ENCODE measurements at regions of chr1 and their contacts with region 1.

Region 1: DNA sequence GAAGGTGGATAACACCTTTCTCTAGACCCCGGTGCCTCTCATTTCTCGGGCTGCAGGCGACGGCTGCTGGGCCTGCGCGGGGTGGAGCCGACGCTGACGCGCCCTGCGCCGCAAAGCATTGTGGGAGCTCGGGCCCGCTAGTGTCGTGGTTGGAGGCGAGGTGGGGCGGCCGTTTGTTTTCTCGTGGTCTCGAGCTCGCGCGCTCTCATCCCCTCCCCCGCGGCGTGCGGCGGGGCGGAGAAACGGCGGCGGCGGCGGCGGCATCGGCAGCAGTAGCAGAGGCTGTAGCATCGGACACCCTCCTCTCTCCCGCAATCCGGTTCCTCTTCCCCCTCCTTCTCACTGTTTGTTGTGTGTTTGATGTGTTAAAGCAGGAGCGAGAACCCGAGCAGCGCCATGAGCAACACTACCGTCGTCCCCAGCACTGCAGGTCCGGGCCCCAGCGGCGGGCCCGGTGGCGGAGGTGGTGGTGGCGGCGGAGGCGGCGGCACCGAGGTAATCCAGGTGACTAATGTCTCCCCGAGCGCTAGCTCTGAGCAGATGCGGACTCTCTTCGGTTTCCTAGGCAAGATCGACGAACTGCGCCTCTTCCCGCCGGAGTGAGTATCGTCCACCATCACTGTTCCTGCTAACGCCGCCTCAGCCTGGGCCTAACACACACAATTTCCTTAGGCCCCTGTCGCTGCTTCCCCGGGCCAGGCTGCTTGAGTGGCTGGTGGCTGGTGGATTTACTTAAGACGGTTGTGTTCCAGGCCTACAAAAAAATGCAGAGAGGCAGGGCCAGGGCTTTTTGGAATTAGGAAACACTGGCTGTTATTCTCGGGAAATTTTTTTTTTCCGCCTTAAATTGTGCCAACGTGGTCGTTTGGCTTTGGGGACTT is at the start of gene SRSF11:
- DNase-seq: peak; percentile 97
- H3K4me3 Mint-ChIP-seq: peak within 1 kb of the TSS; percentile 93
- H3K27ac Mint-ChIP-seq: peak within 1 kb of the TSS; percentile 97
- H3K4me1 Mint-ChIP-seq: peaks cover 39% of the 10 kb centered on the region
- H3K27me3 Mint-ChIP-seq: no peaks in the 10 kb centered on the region
- total RNA-seq, gene SRSF11: 172 to 173 TPM

Region 2: DNA sequence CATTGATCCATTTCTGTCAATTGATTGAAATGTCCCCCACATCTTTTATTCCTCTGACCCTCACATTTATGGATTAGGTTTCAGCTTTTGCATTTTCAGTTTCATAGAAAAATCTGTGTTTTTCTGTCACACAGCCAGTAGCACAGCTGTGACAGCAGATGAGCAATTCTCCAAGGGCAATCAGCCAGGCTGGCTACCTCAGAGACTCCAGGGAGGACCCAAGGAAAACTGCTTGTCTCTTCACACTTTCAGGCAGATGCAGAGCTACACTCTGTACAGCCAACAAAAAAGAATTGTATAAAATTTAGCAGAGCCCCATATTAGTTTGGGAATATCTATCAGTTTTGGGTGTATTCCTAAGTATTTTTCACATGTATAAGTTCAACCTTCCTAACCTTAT is 396.5 kb before region 1 on chr1:
- CTCF ChIA-PET with region 1: no interaction called
- intact Hi-C with region 1: no loop called
- DNase-seq: no peak
- H3K4me3 Mint-ChIP-seq: no peak overlapping the region
- H3K27ac Mint-ChIP-seq: no peak overlapping the region
- H3K4me1 Mint-ChIP-seq: no peaks in the 10 kb centered on the region
- H3K27me3 Mint-ChIP-seq: no peaks in the 10 kb centered on the region

Region 3: DNA sequence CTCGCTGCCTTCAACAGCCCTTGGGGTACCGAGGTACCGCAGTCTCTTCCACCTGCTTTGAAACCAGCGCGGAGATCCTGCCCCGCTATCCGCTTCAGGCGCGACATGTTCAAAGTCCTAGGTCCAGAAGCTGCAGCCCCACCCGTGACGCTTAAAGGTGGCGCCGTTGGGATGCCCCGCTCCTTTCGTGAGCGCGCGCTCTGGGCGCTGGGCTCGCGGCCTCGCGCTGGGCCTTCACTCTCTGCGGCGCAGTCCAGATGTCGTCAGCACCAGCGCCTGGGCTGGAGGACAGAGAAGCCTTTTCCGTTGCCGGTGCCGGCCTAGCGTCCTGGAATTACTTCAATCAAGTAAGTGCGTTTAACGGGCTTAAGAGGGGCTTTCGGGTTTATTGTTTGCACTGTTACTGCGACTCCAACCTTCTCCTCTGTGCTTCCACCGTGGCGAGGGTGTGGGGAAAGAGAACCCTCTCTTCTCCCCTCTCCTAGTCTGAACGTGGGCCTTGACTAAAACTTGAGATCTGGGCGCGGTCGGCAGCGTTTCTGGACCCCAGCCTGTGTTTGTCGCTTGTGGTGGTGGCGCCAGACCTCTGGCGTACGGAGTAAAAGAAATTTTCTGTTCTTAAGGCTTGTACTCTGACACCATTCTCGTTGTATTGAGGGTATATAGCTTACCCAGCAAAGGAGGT is 15.9 kb before region 1 on chr1 and contains the start of gene LRRC40:
- CTCF ChIA-PET with region 1: interaction called, 4 read pairs
- intact Hi-C with region 1: loop called (anchors 1 kb)
- DNase-seq: peak; percentile 97
- H3K4me3 Mint-ChIP-seq: peak within 1 kb of the TSS; percentile 96
- H3K27ac Mint-ChIP-seq: peak within 1 kb of the TSS; percentile 95
- H3K4me1 Mint-ChIP-seq: peaks cover 62% of the 10 kb centered on the region
- H3K27me3 Mint-ChIP-seq: no peaks in the 10 kb centered on the region
- total RNA-seq, gene LRRC40: 20.4 to 20.5 TPM

Region 4: GRCh38 chr1:70210820-70211219 is 10.7 kb before region 1 on chr1:
- CTCF ChIA-PET with region 1: interaction called, 4 read pairs
- intact Hi-C with region 1: loop called (anchors 1 kb)
- DNase-seq: no peak
- H3K4me3 Mint-ChIP-seq: no peak overlapping the region
- H3K27ac Mint-ChIP-seq: no peak overlapping the region
- H3K4me1 Mint-ChIP-seq: peaks cover 42% of the 10 kb centered on the region
- H3K27me3 Mint-ChIP-seq: no peaks in the 10 kb centered on the region

Region 5: DNA sequence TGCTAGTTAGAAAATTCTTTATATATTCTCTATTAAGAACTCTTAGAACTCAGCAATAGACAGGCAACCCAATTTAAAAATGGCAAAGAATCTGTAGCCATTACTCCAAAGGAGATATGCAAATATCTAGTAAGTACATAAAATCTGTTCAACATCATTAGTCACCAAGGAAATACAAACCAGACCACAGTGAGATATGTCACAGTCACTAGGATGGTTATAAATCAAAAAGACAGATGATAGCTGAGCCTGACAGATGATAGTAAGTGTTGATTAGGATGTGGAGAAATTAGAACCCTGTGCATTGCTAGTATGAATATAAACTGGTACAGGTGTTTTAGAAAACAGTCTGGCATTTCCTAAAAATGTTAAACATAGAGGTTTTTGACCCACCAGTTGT is 26.3 kb after region 1 on chr1:
- CTCF ChIA-PET with region 1: interaction called, 6 read pairs
- intact Hi-C with region 1: loop called (anchors 1 kb)
- DNase-seq: no peak
- H3K4me3 Mint-ChIP-seq: no peak overlapping the region
- H3K27ac Mint-ChIP-seq: peak overlapping the region; percentile 84
- H3K4me1 Mint-ChIP-seq: peaks cover 34% of the 10 kb centered on the region
- H3K27me3 Mint-ChIP-seq: no peaks in the 10 kb centered on the region

Region 6: DNA sequence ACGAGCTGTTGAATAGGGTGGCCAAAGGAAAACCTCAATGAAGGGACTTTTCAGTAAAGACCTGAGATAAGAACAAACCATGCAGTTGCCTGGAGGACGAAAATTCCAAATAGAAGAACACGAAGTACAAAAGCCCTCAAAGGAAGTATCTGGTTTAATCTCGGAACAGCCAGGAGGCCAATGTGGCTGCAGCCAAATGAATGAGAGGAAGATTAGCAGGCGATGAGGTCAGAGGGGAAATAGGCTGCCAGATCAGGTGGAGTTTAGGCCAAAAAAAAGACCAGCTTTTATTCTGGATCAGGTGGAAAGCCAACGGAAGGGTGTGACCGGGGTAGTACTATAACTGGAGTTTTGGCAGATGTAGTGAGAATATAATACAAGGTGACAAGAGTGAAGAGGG is 43.4 kb after region 1 on chr1:
- CTCF ChIA-PET with region 1: no interaction called
- intact Hi-C with region 1: no loop called
- DNase-seq: no peak
- H3K4me3 Mint-ChIP-seq: no peak overlapping the region
- H3K27ac Mint-ChIP-seq: peak overlapping the region; percentile 32
- H3K4me1 Mint-ChIP-seq: no peaks in the 10 kb centered on the region
- H3K27me3 Mint-ChIP-seq: no peaks in the 10 kb centered on the region

Region 7: DNA sequence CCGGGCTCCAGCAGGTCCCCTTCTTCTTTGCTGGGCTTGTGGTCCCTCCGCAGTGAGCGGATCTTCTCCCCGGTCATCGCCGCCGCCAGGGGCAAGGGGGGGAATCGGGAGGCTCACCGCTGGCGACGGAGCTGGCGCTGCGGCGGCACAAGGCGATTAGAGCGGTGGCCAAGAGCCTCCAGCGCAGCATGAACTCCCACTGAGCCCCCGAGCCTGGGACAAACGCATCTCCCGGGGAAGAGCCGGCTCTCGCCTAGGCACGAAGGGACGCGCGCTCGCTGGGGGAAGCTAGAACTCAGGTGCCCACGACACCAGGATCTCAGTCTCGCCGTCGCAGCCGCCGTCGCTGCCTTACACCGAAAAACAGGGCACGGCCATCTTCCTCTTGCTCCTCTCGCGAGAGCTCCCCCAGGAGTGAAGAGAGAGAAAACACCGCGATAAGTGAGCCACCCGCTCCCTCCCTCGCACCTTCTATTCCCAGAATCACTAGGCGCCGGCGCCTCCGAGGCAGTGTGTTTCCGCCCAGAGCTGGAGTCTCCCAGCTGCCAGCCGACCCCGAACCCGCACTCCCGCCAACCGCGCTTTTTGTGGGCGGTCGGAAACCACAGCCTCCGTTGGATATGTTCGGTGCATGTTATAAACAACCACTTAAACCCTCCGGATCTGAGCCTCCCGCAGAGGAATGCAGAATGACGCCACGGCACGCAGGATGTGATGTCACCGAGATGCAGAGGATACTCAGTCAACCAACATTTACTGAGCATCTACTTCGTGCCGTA is 133.0 kb after region 1 on chr1 and contains the start of gene ANKRD13C:
- CTCF ChIA-PET with region 1: no interaction called
- intact Hi-C with region 1: loop called (anchors 1 kb)
- DNase-seq: peak; percentile 97
- H3K4me3 Mint-ChIP-seq: peak within 1 kb of the TSS; percentile 98
- H3K27ac Mint-ChIP-seq: peak within 1 kb of the TSS; percentile 99
- H3K4me1 Mint-ChIP-seq: peaks cover 36% of the 10 kb centered on the region
- H3K27me3 Mint-ChIP-seq: no peaks in the 10 kb centered on the region
- total RNA-seq, gene ANKRD13C: 9.2 to 10.3 TPM